Activated CD4-positive, alpha-beta memory T cell treated with anti-CD3 and anti-CD28 coated beads for 36 hours (primary cell): ENCODE measurements at regions of chr1 and their contacts with region 1.

Region 1: GRCh38 chr1:175146529-175147213 is 45.9 kb downstream of the KIAA0040 start:
- DNase-seq: peak; percentile 80
- H3K4me3 Mint-ChIP-seq: no peak overlapping the region
- H3K27ac Mint-ChIP-seq: no peak overlapping the region
- H3K4me1 Mint-ChIP-seq: peaks cover 6% of the 10 kb centered on the region
- H3K27me3 Mint-ChIP-seq: peaks cover 13% of the 10 kb centered on the region

Region 2: DNA sequence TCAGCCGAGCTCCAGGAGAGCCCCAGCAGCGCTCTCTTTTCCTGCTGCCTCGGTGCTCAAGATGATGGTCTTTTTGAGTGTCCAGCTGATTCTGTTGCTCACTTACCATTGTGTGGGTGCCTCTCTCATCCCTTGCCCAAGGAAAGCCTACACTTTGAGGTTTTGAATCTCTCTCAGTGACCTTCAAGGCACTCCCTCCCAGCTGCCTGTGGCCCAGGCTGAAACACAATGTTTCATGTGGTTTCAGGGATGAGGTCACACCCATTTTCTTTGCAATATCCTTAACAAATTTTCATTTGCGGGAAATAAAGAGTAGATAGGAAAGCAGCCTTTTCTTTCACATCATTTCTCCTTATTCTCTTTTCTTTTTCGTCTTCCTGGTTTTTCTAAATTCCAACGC is 110.8 kb before region 1 on chr1:
- CTCF ChIA-PET with region 1: interaction called, 18 read pairs
- POLR2A ChIA-PET with region 1: no interaction called
- intact Hi-C with region 1: no loop called
- DNase-seq: no peak
- H3K4me3 Mint-ChIP-seq: no peak overlapping the region
- H3K27ac Mint-ChIP-seq: no peak overlapping the region
- H3K4me1 Mint-ChIP-seq: no peaks in the 10 kb centered on the region
- H3K27me3 Mint-ChIP-seq: no peaks in the 10 kb centered on the region

Region 3: GRCh38 chr1:175162955-175163354 is 16.3 kb after region 1 on chr1:
- CTCF ChIA-PET with region 1: interaction called, 13 read pairs
- POLR2A ChIA-PET with region 1: no interaction called
- intact Hi-C with region 1: no loop called
- DNase-seq: no peak
- H3K4me3 Mint-ChIP-seq: no peak overlapping the region
- H3K27ac Mint-ChIP-seq: no peak overlapping the region
- H3K4me1 Mint-ChIP-seq: peaks cover 6% of the 10 kb centered on the region
- H3K27me3 Mint-ChIP-seq: no peaks in the 10 kb centered on the region

Region 4: DNA sequence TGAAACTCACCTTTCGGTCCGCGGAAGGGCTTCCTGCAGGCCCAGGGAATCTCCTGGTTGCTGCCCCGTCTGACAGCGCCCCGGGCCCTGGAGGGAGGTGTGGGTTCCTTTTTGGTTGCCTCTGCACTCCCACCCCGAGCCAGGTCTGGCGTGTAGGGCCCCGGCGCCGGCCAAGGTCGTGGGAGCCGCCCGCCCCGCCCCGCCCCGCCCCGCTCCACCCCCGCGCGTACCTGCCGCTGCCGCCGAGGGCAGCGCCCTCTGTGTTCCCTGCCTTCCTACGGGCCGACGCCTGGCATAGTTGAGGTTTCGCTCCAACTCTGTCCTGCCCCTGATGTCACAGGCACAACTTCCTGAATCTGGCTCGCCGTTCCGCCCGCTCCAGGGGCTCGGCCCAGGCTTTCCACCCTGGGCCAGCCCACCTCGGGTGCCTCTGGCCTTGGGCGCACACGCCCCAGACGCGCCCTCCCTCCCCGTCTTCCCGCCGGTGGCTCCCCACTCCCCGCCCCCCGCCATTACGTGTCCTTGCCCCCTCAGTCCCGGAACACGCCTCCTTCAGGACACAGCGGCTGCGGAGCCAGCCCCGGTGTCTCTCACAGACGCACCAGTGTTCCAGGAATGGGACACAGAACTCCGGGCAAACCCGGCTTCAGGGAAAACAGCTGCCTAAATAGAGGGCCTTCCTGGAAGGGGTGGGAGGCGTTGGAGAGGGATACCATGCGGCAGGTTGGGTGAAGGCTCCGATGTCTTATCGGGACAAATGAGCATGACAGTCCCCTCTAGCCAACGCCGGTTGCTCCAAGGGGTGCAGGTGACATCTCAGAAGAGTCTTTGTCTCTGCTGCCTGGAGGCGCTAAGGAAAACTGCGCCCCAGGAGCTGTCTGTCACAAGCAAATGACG is 46.2 kb after region 1 on chr1 and contains the start of gene KIAA0040:
- CTCF ChIA-PET with region 1: interaction called, 43 read pairs
- POLR2A ChIA-PET with region 1: no interaction called
- intact Hi-C with region 1: no loop called
- DNase-seq: peak; percentile 71
- H3K4me3 Mint-ChIP-seq: peak within 1 kb of the TSS; percentile 95
- H3K27ac Mint-ChIP-seq: peak within 1 kb of the TSS; percentile 93
- H3K4me1 Mint-ChIP-seq: peaks cover 48% of the 10 kb centered on the region
- H3K27me3 Mint-ChIP-seq: no peaks in the 10 kb centered on the region
- total RNA-seq, gene KIAA0040: 32.9 to 34.5 TPM

Region 5: GRCh38 chr1:175319418-175320230 is 173.0 kb after region 1 on chr1:
- CTCF ChIA-PET with region 1: interaction called, 449 read pairs
- POLR2A ChIA-PET with region 1: interaction called, 4 read pairs
- intact Hi-C with region 1: no loop called
- DNase-seq: peak; percentile 76
- H3K4me3 Mint-ChIP-seq: no peak overlapping the region
- H3K27ac Mint-ChIP-seq: no peak overlapping the region
- H3K4me1 Mint-ChIP-seq: peaks cover 14% of the 10 kb centered on the region
- H3K27me3 Mint-ChIP-seq: no peaks in the 10 kb centered on the region

Region 6: DNA sequence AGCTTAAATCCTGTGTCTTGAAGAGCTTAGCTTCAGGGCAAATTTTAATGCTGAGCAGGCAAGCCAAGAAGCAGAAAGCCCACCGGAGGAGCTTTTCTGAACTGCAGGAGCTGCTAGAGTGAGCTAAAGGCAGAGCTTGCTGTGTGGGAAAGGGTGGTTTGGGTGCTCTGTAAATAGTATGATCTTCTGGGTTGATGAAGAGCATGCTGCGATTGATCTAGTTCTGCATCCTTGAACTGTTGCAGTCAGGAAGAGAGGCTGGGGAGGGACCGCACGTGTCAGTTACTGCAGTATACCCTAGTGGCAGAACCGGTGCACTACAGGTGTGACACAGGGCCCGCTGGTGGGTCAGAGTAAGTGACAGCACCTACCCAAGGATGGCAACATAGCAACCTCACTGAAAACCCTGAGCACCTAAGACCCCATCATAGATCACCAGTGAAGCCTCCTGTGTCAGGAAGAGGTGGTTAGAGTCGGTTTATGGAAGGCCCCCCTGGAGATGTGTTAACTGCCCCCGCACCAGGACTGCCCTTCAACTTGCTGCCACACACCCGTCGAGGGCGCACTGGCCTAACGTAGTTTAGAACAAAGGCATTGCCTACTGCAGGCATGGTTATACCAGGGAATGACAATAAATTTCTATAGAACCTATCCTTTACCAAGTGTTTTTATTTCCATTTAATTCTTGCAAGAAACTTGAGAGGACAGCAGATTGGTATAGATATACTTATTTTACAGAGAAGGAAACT is 191.9 kb after region 1 on chr1:
- CTCF ChIA-PET with region 1: interaction called, 60 read pairs
- POLR2A ChIA-PET with region 1: no interaction called
- intact Hi-C with region 1: no loop called
- DNase-seq: peak; percentile 73
- H3K4me3 Mint-ChIP-seq: no peak overlapping the region
- H3K27ac Mint-ChIP-seq: no peak overlapping the region
- H3K4me1 Mint-ChIP-seq: no peaks in the 10 kb centered on the region
- H3K27me3 Mint-ChIP-seq: no peaks in the 10 kb centered on the region

Region 7: GRCh38 chr1:175591083-175591743 is 444.5 kb after region 1 on chr1:
- CTCF ChIA-PET with region 1: no interaction called
- POLR2A ChIA-PET with region 1: no interaction called
- intact Hi-C with region 1: no loop called
- DNase-seq: no peak
- H3K4me3 Mint-ChIP-seq: no peak overlapping the region
- H3K27ac Mint-ChIP-seq: no peak overlapping the region
- H3K4me1 Mint-ChIP-seq: no peaks in the 10 kb centered on the region
- H3K27me3 Mint-ChIP-seq: peaks cover 7% of the 10 kb centered on the region